CD4-positive, alpha-beta memory T cell (primary cell): ENCODE measurements at regions of chr12 and their contacts with region 1.

Region 1: DNA sequence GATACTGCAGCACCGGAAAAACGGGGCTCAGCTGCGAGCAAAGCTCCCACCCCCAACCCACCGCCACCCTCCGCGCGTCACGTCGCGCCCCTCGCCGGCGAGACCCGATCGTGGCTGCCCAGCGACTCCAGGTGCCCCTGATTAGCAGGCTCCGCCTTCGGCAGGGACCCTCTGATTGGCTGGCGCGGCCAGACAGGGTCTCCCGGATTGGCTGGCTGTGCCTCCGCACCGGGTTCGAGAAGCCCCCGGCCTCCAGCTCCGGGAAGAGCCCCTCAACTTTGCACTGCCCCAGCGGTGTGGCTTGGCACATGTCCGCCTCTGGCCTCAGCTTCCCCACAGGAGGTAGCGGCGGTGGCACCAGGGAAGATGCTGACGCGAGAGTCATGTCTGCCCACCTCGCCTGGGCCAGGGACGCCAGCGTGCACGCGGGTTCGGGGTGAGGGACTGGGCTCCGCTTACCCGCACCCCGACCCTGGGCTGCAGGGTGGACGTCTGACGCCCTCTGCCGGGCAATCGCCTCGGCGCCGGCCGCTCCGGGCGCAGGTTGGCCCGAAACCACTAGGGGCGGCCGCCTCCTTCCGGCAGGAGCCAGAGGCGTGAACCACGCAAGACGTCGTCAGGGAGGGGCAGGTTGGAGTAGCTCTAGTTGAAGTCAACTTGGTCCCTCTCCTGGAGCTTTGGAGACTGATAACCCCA is 498 bp upstream of the RHOF start:
- DNase-seq: peak; percentile 94 to 98 (median 95)
- H3K4me3 ChIP-seq: peak overlapping the region; percentile 67 to 99
- H3K4me3 Mint-ChIP-seq: peak overlapping the region; percentile 78 to 94 (median 87)
- H3K27ac ChIP-seq: peak overlapping the region; percentile 97
- H3K27ac Mint-ChIP-seq: peak overlapping the region; percentile 97 to 99 (median 97)
- H3K4me1 ChIP-seq: peaks cover 64% of the 10 kb centered on the region
- H3K4me1 Mint-ChIP-seq: peaks cover 32 to 72% (median 54%) of the 10 kb centered on the region in 4 donors
- H3K27me3 ChIP-seq: no peaks in the 10 kb centered on the region
- H3K27me3 Mint-ChIP-seq: no peaks in the 10 kb centered on the region

Region 2: DNA sequence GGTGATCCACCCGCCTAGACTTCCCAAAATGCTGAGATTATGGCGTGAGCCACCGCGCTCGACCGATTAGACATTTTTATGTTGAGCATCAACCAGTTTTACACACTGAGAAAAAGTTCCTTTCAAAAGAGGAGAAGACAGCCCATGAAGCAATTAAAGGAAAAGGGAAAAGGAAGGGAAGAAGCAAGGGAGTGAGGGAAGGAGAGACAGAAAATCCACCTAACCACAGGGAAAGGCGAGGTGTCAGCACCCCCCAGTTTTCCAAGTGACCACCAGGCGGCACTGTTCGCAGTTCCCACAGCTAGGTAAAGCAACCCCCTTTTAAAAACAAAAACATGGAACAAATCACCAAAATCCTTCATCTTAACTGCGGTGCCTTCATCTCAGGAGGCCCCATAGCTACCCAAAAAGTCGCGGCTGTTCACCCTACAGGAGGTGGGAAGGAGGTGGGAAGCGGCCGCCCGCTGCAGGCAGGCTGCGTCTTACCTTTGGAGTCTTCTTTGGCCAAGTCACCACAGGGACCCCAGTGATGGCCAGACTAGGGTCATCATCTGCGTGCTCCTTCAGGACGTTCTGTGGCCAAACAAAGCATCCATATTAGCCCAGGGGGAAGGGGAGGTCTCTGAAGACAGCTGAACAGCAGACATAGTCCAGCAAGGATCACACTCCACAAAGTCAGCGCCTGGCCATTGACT is 299.7 kb before region 1 on chr12:
- CTCF ChIA-PET with region 1: no interaction called
- POLR2A ChIA-PET with region 1: no interaction called
- intact Hi-C with region 1: no loop called
- DNase-seq: peak; percentile 44 to 59 (median 56)
- H3K4me3 ChIP-seq: no peak overlapping the region
- H3K4me3 Mint-ChIP-seq: no peak overlapping the region
- H3K27ac ChIP-seq: no peak overlapping the region
- H3K27ac Mint-ChIP-seq: peak overlapping the region in 4 of 7 donors; percentile 41 to 93 (median 56)
- H3K4me1 ChIP-seq: peaks cover 12% of the 10 kb centered on the region
- H3K4me1 Mint-ChIP-seq: peaks cover 10 to 20% (median 15%) of the 10 kb centered on the region in 4 donors
- H3K27me3 ChIP-seq: no peaks in the 10 kb centered on the region
- H3K27me3 Mint-ChIP-seq: no peaks in the 10 kb centered on the region

Region 3: GRCh38 chr12:121688966-121689365 is 105.0 kb before region 1 on chr12:
- CTCF ChIA-PET with region 1: interaction called, 90 read pairs
- POLR2A ChIA-PET with region 1: interaction called, 20 read pairs
- intact Hi-C with region 1: loop called (anchors 2 kb)
- DNase-seq: no peak
- H3K4me3 ChIP-seq: no peak overlapping the region
- H3K4me3 Mint-ChIP-seq: no peak overlapping the region
- H3K27ac ChIP-seq: no peak overlapping the region
- H3K27ac Mint-ChIP-seq: peak overlapping the region in 5 of 7 donors; percentile 12 to 48 (median 37)
- H3K4me1 ChIP-seq: peaks cover 6% of the 10 kb centered on the region
- H3K4me1 Mint-ChIP-seq: peaks cover 6 to 13% (median 7%) of the 10 kb centered on the region in 4 donors
- H3K27me3 ChIP-seq: no peaks in the 10 kb centered on the region
- H3K27me3 Mint-ChIP-seq: no peaks in the 10 kb centered on the region

Region 4: GRCh38 chr12:121712461-121713256 is 81.3 kb before region 1 on chr12 and contains the start of gene TMEM120B:
- CTCF ChIA-PET with region 1: interaction called, 28 read pairs
- POLR2A ChIA-PET with region 1: interaction called, 29 read pairs
- intact Hi-C with region 1: loop called (anchors 5 kb)
- DNase-seq: peak; percentile 78 to 89 (median 84)
- H3K4me3 ChIP-seq: peak within 1 kb of the TSS; percentile 57 to 93
- H3K4me3 Mint-ChIP-seq: peak within 1 kb of the TSS; percentile 91 to 98 (median 96)
- H3K27ac ChIP-seq: peak within 1 kb of the TSS; percentile 63
- H3K27ac Mint-ChIP-seq: peak within 1 kb of the TSS; percentile 85 to 97 (median 95)
- H3K4me1 ChIP-seq: peaks cover 16% of the 10 kb centered on the region
- H3K4me1 Mint-ChIP-seq: peaks cover 7 to 26% (median 17%) of the 10 kb centered on the region in 4 donors
- H3K27me3 ChIP-seq: no peaks in the 10 kb centered on the region
- H3K27me3 Mint-ChIP-seq: no peaks in the 10 kb centered on the region
- total RNA-seq, gene TMEM120B: 11.3 to 12.8 TPM

Region 5: DNA sequence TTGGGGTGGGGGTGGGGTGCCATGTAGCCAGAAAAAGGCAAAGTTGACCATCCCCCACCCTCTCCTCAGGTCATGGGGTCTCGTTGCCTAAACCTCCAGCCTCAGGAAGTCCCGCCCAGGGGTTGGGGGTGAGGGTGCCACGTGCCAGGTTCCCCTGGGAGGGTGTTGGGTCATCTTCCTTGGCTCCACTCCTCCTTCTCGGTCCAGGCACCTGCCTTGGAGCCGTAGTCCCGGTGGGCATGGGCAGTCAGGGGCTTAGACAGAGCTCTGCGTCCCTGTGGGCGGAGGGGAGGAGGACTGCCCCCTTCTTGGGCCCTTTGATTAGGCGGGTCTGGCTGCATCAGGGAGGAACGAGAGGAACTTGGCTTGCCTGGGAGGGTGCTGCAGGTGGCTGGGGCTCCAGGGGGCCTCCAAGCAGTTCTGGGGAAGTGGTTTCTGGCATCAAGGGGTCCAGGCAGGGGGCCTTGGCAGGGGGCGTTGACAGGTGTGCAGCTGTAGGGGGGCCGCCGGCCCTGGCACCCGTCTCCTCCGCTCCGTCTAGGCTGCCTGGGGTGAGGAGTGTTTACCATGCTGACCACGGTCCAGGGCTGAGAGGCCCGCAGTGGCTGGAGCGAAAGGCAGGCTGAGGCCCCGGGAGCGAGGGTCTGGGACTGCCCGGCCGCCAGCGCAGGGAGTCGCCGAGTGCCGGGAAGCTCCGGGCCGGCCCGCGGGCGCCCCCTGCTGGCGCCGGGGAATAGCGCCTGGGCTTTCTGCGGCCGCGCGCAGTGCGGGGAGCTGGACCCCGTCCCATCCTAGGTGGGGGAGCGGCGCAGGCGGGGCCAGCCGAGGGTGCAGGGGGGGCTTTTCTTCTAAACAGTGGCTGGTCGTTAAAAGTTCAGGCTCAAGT is 17.7 kb after region 1 on chr12:
- CTCF ChIA-PET with region 1: interaction called, 918 read pairs
- POLR2A ChIA-PET with region 1: interaction called, 2,727 read pairs
- intact Hi-C with region 1: loop called (anchors 1 kb)
- DNase-seq: peak; percentile 61 to 81 (median 74)
- H3K4me3 ChIP-seq: peak overlapping the region; percentile 42 to 63
- H3K4me3 Mint-ChIP-seq: peak overlapping the region; percentile 80 to 90 (median 86)
- H3K27ac ChIP-seq: peak overlapping the region; percentile 50
- H3K27ac Mint-ChIP-seq: peak overlapping the region in 6 of 7 donors; percentile 42 to 93 (median 80)
- H3K4me1 ChIP-seq: peaks cover 61% of the 10 kb centered on the region
- H3K4me1 Mint-ChIP-seq: peaks cover 26 to 67% (median 49%) of the 10 kb centered on the region in 4 donors
- H3K27me3 ChIP-seq: no peaks in the 10 kb centered on the region
- H3K27me3 Mint-ChIP-seq: no peaks in the 10 kb centered on the region

Region 6: GRCh38 chr12:121888478-121889266 is 94.7 kb after region 1 on chr12 and contains the start of gene PSMD9:
- CTCF ChIA-PET with region 1: interaction called, 119 read pairs
- POLR2A ChIA-PET with region 1: interaction called, 117 read pairs
- intact Hi-C with region 1: loop called (anchors 1 kb)
- DNase-seq: peak; percentile 97 to 99 (median 98)
- H3K4me3 ChIP-seq: peak within 1 kb of the TSS; percentile 77 to 88
- H3K4me3 Mint-ChIP-seq: peak within 1 kb of the TSS; percentile 96 to 99 (median 98)
- H3K27ac ChIP-seq: peak within 1 kb of the TSS; percentile 91
- H3K27ac Mint-ChIP-seq: peak within 1 kb of the TSS; percentile 99 to 100 (median 99)
- H3K4me1 ChIP-seq: peaks cover 29% of the 10 kb centered on the region
- H3K4me1 Mint-ChIP-seq: peaks cover 19 to 43% (median 33%) of the 10 kb centered on the region in 4 donors
- H3K27me3 ChIP-seq: no peaks in the 10 kb centered on the region
- H3K27me3 Mint-ChIP-seq: peaks cover 0 to 3% of the 10 kb centered on the region in 2 donors
- total RNA-seq, gene PSMD9: 41.4 to 42.7 TPM

Region 7: DNA sequence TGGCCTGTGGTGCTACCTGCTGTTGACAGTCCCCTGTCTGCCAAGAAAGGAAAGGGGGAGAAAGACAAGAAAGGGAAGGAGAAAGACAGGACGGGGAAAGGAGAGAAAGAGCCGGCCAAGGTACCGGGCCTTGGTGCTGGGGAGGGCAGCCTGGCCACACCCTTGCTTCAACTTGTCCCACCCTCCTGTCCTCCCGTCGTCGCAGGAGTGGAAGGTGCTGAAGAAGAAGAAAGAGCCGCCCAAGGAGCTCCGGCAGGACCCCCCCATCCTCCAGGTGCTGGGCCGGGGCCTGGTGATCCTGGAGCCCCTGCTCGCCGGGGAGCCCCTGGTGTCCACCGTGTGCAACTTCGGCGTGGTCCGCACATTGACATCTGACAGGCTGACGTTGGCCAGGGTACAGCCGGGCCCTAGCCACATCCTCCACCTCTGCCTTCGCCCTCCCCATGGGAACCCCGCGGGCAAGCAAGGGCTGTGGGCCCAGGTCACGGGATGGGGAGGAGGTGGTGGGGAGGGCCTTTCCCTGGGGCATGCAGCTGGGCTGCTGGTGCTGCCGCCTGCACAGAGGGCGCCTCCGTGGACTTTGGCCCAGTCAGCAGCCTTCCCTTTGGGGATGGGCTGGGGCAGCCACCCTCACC is 406.7 kb after region 1 on chr12:
- CTCF ChIA-PET with region 1: no interaction called
- POLR2A ChIA-PET with region 1: no interaction called
- intact Hi-C with region 1: no loop called
- DNase-seq: no peak
- H3K4me3 ChIP-seq: no peak overlapping the region
- H3K4me3 Mint-ChIP-seq: no peak overlapping the region
- H3K27ac ChIP-seq: no peak overlapping the region
- H3K27ac Mint-ChIP-seq: no peak overlapping the region
- H3K4me1 ChIP-seq: peaks cover 9% of the 10 kb centered on the region
- H3K4me1 Mint-ChIP-seq: peaks cover 7 to 21% (median 15%) of the 10 kb centered on the region in 4 donors
- H3K27me3 ChIP-seq: no peaks in the 10 kb centered on the region
- H3K27me3 Mint-ChIP-seq: peaks cover 7 to 19% of the 10 kb centered on the region in 2 donors